A549 (cell line): ENCODE measurements at regions of chr19 and their contacts with region 1.

Region 1: GRCh38 chr19:48872182-48872883 is at the start of gene PPP1R15A:
- DNase-seq: peak; percentile 98 to 100
- ATAC-seq: peak; percentile 55 to 58
- H3K4me3 ChIP-seq: peak within 1 kb of the TSS; percentile 92
- H3K27ac ChIP-seq: peak within 1 kb of the TSS; percentile 95 to 97
- H3K4me1 ChIP-seq: peaks cover 40% of the 10 kb centered on the region
- CTCF ChIP-seq: no peak
- EP300 ChIP-seq: no peak
- POLR2A ChIP-seq: peak; percentile 99
- RAD21 ChIP-seq: no peak; a peak in 1 of 5 replicates
- polyA plus RNA-seq, gene PPP1R15A: 49.0 and 74.2 TPM in 2 replicates

Region 2: GRCh38 chr19:48835734-48836088 is 36.6 kb before region 1 on chr19:
- CTCF ChIA-PET with region 1: interaction called, 11 read pairs
- POLR2A ChIA-PET with region 1: interaction called, 13 read pairs
- DNase-seq: peak; percentile 94
- ATAC-seq: peak; percentile 87 to 88
- H3K4me3 ChIP-seq: peak overlapping the region; percentile 49
- H3K27ac ChIP-seq: peak overlapping the region; percentile 80 to 90
- H3K4me1 ChIP-seq: peaks cover 7% of the 10 kb centered on the region; the same call in 2 of the 3 replicates
- CTCF ChIP-seq: peak; percentile 98
- EP300 ChIP-seq: no peak
- POLR2A ChIP-seq: no peak
- RAD21 ChIP-seq: peak; percentile 97 to 98

Region 3: DNA sequence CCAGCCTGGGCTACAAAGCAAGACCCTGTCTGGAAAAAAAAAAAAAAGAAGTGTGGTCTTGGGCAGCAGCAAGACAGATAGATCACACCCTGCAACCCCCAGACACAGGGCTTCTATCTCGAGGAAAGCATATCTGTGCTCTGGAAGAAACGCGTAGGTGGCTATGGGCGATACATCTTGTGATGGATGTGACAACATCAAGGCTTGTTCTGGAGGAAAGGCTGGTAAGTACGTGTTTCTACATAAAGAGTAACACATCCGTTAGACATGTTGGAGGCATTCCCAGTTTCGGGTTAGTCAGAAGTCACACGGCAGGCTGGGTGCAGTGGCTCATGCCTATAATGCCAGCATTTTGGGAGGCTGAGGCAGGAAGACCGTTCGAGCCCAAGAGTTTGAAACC is 54.6 kb after region 1 on chr19:
- CTCF ChIA-PET with region 1: no interaction called
- POLR2A ChIA-PET with region 1: interaction called, 24 read pairs
- DNase-seq: peak; percentile 65 to 87
- ATAC-seq: peak; percentile 67 to 84
- H3K4me3 ChIP-seq: no peak overlapping the region
- H3K27ac ChIP-seq: peak overlapping the region; percentile 67 to 85
- H3K4me1 ChIP-seq: peaks cover 41% of the 10 kb centered on the region
- CTCF ChIP-seq: no peak
- EP300 ChIP-seq: peak in 1 of 2 experiments; percentile 39; a peak in 1 of 5 replicates
- POLR2A ChIP-seq: no peak
- RAD21 ChIP-seq: no peak

Region 4: GRCh38 chr19:48946463-48947257 is 74.3 kb after region 1 on chr19:
- CTCF ChIA-PET with region 1: interaction called, 4 read pairs
- POLR2A ChIA-PET with region 1: interaction called, 10 read pairs
- DNase-seq: no peak
- ATAC-seq: peak in 1 of 2 experiments; percentile 21; a peak in 3 of 6 replicates
- H3K4me3 ChIP-seq: no peak overlapping the region
- H3K27ac ChIP-seq: peak overlapping the region in 1 of 2 experiments; percentile 29; a peak in 2 of 6 replicates
- H3K4me1 ChIP-seq: no peaks in the 10 kb centered on the region
- CTCF ChIP-seq: no peak
- EP300 ChIP-seq: no peak
- POLR2A ChIP-seq: no peak
- RAD21 ChIP-seq: no peak

Region 5: GRCh38 chr19:48965040-48965805 is 92.9 kb after region 1 on chr19 and contains the start of gene FTL:
- CTCF ChIA-PET with region 1: interaction called, 121 read pairs
- POLR2A ChIA-PET with region 1: interaction called, 175 read pairs
- DNase-seq: peak; percentile 99
- ATAC-seq: peak; percentile 11 to 51
- H3K4me3 ChIP-seq: peak within 1 kb of the TSS; percentile 66
- H3K27ac ChIP-seq: peak within 1 kb of the TSS; percentile 92 to 96
- H3K4me1 ChIP-seq: peaks cover 62% of the 10 kb centered on the region
- CTCF ChIP-seq: no peak
- EP300 ChIP-seq: peak in 1 of 2 experiments; percentile 58; a peak in 1 of 5 replicates
- POLR2A ChIP-seq: peak; percentile 99
- RAD21 ChIP-seq: 0 out of 5 replicates have a peak, but pooled peaks have one; percentile 18 to 21
- polyA plus RNA-seq, gene FTL: 4,743 and 7,067 TPM in 2 replicates